SK-N-SH (cell line): ENCODE measurements at regions of chr4 and their contacts with region 1.

Region 1: DNA sequence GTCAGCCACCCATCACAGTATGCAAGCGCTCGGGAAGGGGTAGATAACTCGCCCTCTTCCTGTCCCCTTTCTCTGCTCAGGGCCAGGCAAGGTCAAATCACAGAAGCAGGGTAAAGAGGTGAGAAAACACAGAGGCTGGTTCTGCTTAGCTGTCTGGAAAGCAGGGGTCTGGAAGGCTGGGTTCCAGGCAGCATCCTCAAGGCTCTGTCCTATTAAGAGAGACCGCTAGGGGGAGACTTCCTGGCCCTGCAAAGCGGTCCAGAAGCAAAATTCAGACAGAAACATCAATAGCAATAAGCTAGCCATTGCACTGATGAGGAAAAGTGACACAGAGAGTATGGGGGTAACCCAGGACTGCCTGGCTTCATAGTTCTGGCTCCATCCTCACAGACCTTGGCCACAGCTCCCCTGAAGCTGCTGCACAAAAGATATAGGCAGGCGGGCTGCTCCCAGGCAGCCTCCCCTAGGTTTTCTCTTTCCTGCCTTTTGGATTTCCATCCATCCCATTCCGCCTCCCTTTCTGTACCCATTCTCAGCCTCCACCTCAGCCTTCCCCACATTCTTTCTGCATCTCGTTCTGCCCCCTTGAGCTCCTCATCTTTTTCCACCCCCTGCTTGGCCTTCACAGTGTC is 308.5 kb downstream of the EVC2 start:
- DNase-seq: peak; percentile 63
- H3K4me3 ChIP-seq: peak overlapping the region in 1 of 2 experiments; percentile 41; a peak in 1 of 4 replicates
- H3K27ac ChIP-seq: no peak overlapping the region
- H3K4me1 ChIP-seq: peaks cover 0 to 4% of the 10 kb centered on the region in 2 experiments; a peak in 1 of 4 replicates
- H3K27me3 ChIP-seq: no peaks in the 10 kb centered on the region
- CTCF ChIP-seq: peak; percentile 71
- EP300 ChIP-seq: no peak
- RAD21 ChIP-seq: peak; percentile 70

Region 2: GRCh38 chr4:5340991-5341451 is 58.9 kb before region 1 on chr4:
- CTCF ChIA-PET with region 1: no interaction called
- POLR2A ChIA-PET with region 1: no interaction called
- DNase-seq: no peak
- H3K4me3 ChIP-seq: no peak overlapping the region
- H3K27ac ChIP-seq: no peak overlapping the region
- H3K4me1 ChIP-seq: no peaks in the 10 kb centered on the region
- H3K27me3 ChIP-seq: no peaks in the 10 kb centered on the region
- CTCF ChIP-seq: no peak
- EP300 ChIP-seq: no peak
- RAD21 ChIP-seq: no peak

Region 3: DNA sequence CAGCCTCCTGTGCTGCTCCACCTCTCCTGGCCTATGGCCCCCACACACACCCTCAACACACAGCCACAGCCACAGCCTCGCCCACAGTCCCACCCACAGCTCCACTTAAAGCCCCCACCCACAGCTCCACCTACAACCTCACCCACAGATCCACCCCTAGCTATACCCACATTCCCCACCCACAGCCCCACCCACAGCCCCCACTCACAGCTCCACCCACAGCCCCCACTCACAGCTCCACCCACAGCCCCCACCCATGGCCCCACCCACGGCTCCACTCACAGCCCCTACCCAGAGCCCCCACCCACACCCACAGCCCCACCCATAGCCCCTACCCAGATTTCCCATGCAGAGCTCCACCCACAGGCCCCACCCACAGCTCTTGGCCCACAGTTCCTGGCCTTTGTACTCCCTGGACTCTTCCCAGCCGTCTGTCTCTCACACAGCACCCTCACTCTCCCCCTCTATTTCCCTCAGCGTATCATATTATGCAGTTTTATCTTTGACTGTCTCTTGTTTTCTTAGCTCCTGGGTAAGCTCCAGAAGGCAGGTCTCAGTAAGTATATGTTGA is 14.1 kb before region 1 on chr4:
- CTCF ChIA-PET with region 1: interaction called, 16 read pairs
- POLR2A ChIA-PET with region 1: no interaction called
- DNase-seq: no peak
- H3K4me3 ChIP-seq: no peak overlapping the region
- H3K27ac ChIP-seq: no peak overlapping the region
- H3K4me1 ChIP-seq: no peaks in the 10 kb centered on the region
- H3K27me3 ChIP-seq: no peaks in the 10 kb centered on the region
- CTCF ChIP-seq: no peak
- EP300 ChIP-seq: no peak
- RAD21 ChIP-seq: no peak

Region 4: DNA sequence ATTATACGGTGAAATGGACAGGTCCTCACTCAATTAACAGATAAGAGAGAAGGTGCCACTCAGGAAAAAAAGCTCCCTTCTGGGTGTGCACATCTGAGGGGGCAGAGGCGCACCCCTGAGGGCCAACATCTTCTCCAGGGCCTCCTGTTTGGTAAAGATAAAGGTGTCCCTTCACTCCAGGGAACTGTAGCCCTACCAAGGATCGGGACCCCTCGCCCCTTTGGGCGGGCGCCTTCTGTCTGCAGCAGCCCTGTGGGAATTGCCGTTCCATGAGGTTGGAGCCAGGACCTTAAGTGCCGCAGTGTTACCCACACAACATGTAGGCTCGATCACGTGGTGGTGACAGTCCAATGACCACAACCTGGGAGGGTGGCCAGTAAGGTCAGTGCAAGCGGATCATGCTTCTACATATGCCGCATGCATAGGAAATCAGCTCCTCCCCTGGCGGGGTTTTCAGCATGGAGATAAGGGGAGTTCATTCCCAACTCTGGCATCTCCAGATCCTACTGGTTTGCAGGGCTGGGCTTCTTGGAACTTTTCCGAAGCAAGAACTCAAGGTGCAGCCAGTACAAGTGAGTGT is 55.2 kb after region 1 on chr4:
- CTCF ChIA-PET with region 1: interaction called, 16 read pairs
- POLR2A ChIA-PET with region 1: no interaction called
- DNase-seq: no peak
- H3K4me3 ChIP-seq: no peak overlapping the region
- H3K27ac ChIP-seq: no peak overlapping the region
- H3K4me1 ChIP-seq: peaks cover 0 to 3% of the 10 kb centered on the region in 2 experiments; a peak in 1 of 4 replicates
- H3K27me3 ChIP-seq: no peaks in the 10 kb centered on the region; the same call in 1 of the 2 replicates
- CTCF ChIP-seq: no peak
- EP300 ChIP-seq: no peak
- RAD21 ChIP-seq: no peak

Region 5: DNA sequence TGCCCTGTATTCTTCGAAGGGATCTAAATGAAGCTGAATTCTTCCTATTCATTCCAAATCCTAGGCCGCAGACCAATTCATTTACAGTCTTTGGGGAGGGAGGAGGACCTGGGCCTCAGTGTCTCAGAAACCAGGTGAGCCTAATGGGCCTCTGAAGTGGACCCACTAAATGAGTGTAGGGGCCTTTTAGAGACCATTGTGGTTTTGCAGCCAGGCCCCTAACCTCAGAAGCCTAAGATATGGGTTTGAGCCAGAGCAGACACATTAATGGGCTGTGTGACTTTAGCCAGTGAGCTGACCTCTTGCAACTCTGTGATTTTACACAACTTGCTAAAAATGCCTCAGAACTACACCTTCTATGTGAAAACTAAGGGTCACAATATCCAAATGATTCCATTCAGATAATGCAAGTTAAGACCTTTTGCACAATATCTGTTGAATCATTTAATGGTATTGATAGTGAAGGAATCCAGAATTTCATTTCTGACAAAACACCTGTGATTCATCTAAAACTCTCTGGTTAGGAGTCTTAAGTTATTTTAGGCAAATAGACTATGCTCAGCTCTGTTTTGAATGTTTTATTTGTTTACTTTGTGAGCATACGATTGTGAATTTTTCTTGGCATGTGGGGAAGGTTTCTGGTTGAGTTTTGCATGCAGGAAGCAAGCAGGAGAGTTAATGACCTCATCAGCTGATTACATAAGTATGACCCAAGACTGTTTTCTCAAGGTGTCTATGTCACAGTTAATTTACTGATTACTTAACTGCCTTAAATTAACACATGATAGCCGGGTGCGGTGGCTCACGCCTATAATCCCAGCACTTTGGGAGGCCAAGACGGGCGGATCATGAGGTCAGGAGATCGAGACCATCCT is 386.1 kb after region 1 on chr4:
- CTCF ChIA-PET with region 1: interaction called, 20 read pairs
- POLR2A ChIA-PET with region 1: no interaction called
- DNase-seq: no peak
- H3K4me3 ChIP-seq: no peak overlapping the region
- H3K27ac ChIP-seq: no peak overlapping the region
- H3K4me1 ChIP-seq: no peaks in the 10 kb centered on the region
- H3K27me3 ChIP-seq: no peaks in the 10 kb centered on the region
- CTCF ChIP-seq: no peak
- EP300 ChIP-seq: no peak
- RAD21 ChIP-seq: no peak